ENCODE measurements at regions of chr16 and their contacts with region 1.

Region 1: GRCh38 chr16:3059000-3059722 is 6.3 kb upstream of the IL32 start:
- DNase-seq: peak; percentile 74 to 95 (median 87)
- ATAC-seq: peak; percentile 87
- H3K4me3 ChIP-seq: peak overlapping the region; percentile 84 to 85
- H3K4me3 Mint-ChIP-seq: peak overlapping the region; percentile 86
- H3K27ac ChIP-seq: peak overlapping the region; percentile 60 to 86
- H3K27ac Mint-ChIP-seq: peak overlapping the region; percentile 86
- H3K4me1 ChIP-seq: peaks cover 45% of the 10 kb centered on the region
- H3K4me1 Mint-ChIP-seq: peaks cover 49% of the 10 kb centered on the region
- H3K27me3 ChIP-seq: no peaks in the 10 kb centered on the region
- H3K27me3 Mint-ChIP-seq: no peaks in the 10 kb centered on the region
- CTCF ChIP-seq: peak; percentile 88

Region 2: DNA sequence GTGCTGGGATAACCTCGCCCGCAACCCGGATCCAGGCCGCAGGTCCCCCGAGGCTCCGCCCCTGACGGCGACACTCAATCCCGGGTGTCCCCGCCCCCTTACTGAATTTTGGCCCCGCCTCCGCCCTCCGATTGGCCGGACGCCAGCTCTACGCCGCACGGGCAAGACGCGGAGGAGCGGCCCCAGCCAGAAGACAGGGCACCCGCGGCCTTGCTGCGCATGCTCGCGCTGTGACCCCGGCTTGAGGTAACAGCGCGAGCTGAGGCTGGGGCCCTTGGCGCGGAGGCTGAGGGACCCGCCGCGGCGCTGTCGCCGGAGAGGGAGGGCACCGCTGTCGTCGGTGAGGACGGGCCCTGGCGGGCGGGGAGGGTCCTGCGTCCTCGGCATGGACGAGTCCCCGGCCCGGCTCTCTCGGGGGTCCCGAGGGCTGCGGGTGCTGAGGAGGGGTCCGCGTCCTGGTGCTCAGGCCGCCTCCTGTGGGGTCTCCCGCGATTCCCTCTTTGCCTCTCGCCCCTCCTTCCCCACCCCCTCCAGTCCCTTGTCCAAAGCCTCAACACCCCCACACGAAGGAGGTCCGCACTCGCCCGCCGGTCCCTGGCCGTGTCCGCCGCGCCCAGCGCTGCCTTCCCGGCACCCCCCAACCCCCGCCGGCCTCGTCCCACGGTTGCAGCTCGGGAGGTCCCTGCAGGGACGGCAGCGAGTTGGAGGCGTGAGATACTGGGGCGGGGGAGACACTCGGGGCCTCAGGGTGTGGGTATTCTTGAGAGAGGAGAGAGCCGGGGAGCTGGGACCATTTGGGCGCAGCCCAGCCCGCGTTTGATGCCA is 175.9 kb before region 1 on chr16 and contains the start of gene FLYWCH2:
- CTCF ChIA-PET with region 1: no interaction called
- POLR2A ChIA-PET with region 1: no interaction called
- intact Hi-C with region 1: no loop called
- DNase-seq: peak; percentile 98 to 100 (median 99)
- ATAC-seq: peak; percentile 83
- H3K4me3 ChIP-seq: peak within 1 kb of the TSS; percentile 69 to 78
- H3K4me3 Mint-ChIP-seq: peak within 1 kb of the TSS; percentile 87
- H3K27ac ChIP-seq: peak within 1 kb of the TSS; percentile 90 to 94
- H3K27ac Mint-ChIP-seq: peak within 1 kb of the TSS; percentile 95
- H3K4me1 ChIP-seq: peaks cover 9% of the 10 kb centered on the region
- H3K4me1 Mint-ChIP-seq: peaks cover 17% of the 10 kb centered on the region
- H3K27me3 ChIP-seq: no peaks in the 10 kb centered on the region
- H3K27me3 Mint-ChIP-seq: no peaks in the 10 kb centered on the region
- CTCF ChIP-seq: no peak
- total RNA-seq, gene FLYWCH2: 9.3 to 10.9 TPM

Region 3: DNA sequence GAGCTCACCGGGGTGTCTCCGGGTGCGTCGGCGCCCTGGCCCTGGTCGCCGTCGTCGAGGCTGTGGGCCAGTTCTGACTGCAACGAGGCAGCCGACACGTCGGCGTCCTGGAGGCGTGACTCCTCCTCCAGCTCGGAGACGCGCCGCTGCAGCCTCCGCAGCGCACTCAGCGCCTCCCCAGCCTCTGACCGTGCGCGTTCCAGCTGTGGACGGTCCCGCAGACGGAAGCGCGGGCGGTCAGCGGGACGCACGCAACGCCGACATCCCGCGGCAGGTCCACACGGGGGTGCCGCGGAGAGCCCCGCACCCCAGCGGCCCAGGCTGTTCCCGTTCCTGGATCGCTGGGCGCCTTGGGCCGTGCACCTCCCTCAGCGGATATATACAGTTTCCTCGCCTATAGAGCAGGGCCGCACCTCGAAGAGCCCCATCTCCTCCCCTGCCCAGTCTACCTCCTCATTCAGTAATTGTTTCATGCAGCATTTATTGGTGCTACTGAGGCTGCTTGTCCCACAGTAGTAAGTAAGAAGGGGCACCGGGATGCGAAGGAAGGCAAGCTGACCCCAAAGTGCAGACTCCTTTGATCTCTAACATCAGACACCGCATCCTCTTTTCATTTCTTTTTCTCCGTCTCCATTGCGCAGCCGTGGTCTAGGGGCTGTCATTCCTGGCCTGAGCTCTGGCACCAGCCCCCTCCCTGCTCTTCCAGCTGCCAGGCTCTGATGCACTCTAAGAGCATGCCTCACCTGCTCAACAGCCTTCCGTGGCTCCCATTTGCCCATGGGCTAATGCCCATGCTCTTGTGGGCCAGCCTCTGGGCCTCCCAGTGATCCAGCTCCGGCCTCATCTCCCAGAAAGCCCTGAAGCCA is 29.4 kb before region 1 on chr16:
- CTCF ChIA-PET with region 1: interaction called, 33 read pairs
- POLR2A ChIA-PET with region 1: interaction called, 4 read pairs
- intact Hi-C with region 1: no loop called
- DNase-seq: peak in 4 of 9 experiments; percentile 26 to 64 (median 42)
- ATAC-seq: peak; percentile 15
- H3K4me3 ChIP-seq: peak overlapping the region in 1 of 2 experiments; percentile 28
- H3K4me3 Mint-ChIP-seq: peak overlapping the region; percentile 66
- H3K27ac ChIP-seq: no peak overlapping the region
- H3K27ac Mint-ChIP-seq: no peak overlapping the region
- H3K4me1 ChIP-seq: peaks cover 33% of the 10 kb centered on the region
- H3K4me1 Mint-ChIP-seq: peaks cover 18% of the 10 kb centered on the region
- H3K27me3 ChIP-seq: peaks cover 20 to 30% of the 10 kb centered on the region in 2 experiments
- H3K27me3 Mint-ChIP-seq: peaks cover 38% of the 10 kb centered on the region
- CTCF ChIP-seq: no peak

Region 4: DNA sequence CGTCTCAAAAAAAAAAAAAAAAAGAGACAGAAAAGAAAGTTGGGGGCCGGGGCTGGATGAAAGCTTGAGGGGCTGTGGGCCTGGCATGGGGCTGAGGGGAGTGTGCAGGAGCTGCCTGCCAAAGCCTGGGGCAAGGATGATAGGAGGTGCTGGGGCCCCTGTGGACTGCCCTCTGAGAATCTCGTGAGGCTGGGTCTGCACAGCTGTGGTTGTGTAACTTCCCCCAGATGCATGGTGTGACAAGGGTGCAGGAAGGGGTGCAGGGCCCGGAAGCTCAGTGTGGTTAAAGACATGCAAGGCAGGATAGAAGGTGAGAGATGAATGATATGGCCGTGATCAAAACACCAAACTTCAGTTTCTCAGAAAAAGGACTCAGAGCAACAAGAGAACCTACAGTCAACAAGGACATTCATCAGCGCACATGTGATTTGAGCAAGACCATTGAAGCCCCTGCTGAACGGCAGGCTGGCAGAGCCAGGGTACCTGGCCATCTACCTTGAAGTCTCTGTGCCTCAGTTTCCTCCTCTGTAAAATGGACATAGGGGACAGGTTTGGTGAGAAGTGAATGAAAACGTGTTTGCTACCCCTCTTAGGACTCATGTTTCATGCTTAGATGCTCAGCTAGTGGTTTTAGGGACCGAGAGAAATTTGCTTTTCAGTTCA is 15.8 kb after region 1 on chr16:
- CTCF ChIA-PET with region 1: interaction called, 46 read pairs
- POLR2A ChIA-PET with region 1: interaction called, 27 read pairs
- intact Hi-C with region 1: loop called (anchors 1 to 2 kb)
- DNase-seq: peak; percentile 52 to 95 (median 86)
- ATAC-seq: peak; percentile 88
- H3K4me3 ChIP-seq: peak overlapping the region; percentile 3 to 19
- H3K4me3 Mint-ChIP-seq: peak overlapping the region; percentile 72
- H3K27ac ChIP-seq: peak overlapping the region; percentile 49 to 81
- H3K27ac Mint-ChIP-seq: peak overlapping the region; percentile 95
- H3K4me1 ChIP-seq: peaks cover 87% of the 10 kb centered on the region
- H3K4me1 Mint-ChIP-seq: peaks cover 89% of the 10 kb centered on the region
- H3K27me3 ChIP-seq: no peaks in the 10 kb centered on the region
- H3K27me3 Mint-ChIP-seq: no peaks in the 10 kb centered on the region
- CTCF ChIP-seq: no peak

Region 5: GRCh38 chr16:3106205-3106928 is 47.2 kb after region 1 on chr16:
- CTCF ChIA-PET with region 1: interaction called, 77 read pairs
- POLR2A ChIA-PET with region 1: interaction called, 3 read pairs
- intact Hi-C with region 1: loop called (anchors 1 to 2 kb)
- DNase-seq: peak; percentile 79 to 95 (median 90)
- ATAC-seq: peak; percentile 94
- H3K4me3 ChIP-seq: peak overlapping the region; percentile 74 to 77
- H3K4me3 Mint-ChIP-seq: peak overlapping the region; percentile 86
- H3K27ac ChIP-seq: peak overlapping the region; percentile 75 to 93
- H3K27ac Mint-ChIP-seq: peak overlapping the region; percentile 89
- H3K4me1 ChIP-seq: peaks cover 24% of the 10 kb centered on the region
- H3K4me1 Mint-ChIP-seq: peaks cover 26% of the 10 kb centered on the region
- H3K27me3 ChIP-seq: no peaks in the 10 kb centered on the region
- H3K27me3 Mint-ChIP-seq: no peaks in the 10 kb centered on the region
- CTCF ChIP-seq: no peak

Region 6: DNA sequence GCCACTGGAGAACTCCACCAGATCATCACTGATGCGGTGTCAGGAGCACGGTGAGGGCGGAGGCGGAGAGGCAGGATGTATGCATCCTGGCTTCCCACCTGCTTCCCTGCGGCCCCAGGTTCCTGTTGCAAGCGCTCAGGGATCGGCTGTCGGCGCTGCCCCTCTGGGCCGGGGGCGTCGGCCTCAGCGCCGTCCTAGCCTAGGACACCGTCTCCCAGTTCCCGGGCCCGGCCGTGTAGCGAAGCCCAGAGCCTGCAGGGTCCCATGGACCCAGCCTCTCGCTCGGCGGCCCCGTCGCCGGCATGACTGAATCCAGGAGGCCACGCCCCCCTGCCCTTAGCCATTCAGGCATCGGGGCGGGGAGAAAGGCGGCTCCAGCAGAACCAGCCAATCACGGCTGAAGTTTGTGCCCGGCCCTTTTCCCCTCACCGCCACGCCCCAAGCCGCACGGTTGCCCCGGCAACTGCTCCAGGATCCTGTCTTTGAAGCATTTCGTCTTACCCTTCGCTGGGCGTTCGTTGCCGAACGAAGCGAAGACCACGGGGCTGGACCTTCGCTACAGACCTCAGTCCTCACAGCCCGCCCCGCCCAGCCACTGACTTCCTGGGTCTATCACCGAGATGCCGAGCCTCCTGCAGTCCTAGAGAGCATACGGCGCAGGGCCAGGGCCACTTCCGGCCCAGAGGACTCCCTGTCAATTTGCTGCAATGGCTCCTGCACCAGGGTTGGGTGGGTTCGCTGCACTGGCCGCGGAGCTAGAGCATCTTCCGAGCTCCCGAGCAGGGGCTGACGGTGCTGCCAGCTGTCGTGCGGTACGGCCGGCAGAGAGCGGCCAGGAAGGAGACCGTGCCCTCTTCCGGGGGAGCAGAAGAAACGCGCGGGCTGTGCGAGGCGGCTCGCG is 65.1 kb after region 1 on chr16:
- CTCF ChIA-PET with region 1: interaction called, 324 read pairs
- POLR2A ChIA-PET with region 1: interaction called, 36 read pairs
- intact Hi-C with region 1: loop called (anchors 1 kb)
- DNase-seq: peak; percentile 88 to 98 (median 97)
- ATAC-seq: peak; percentile 90
- H3K4me3 ChIP-seq: peak overlapping the region; percentile 72 to 89
- H3K4me3 Mint-ChIP-seq: peak overlapping the region; percentile 98
- H3K27ac ChIP-seq: peak overlapping the region; percentile 44 to 72
- H3K27ac Mint-ChIP-seq: peak overlapping the region; percentile 95
- H3K4me1 ChIP-seq: peaks cover 30% of the 10 kb centered on the region
- H3K4me1 Mint-ChIP-seq: peaks cover 45% of the 10 kb centered on the region
- H3K27me3 ChIP-seq: no peaks in the 10 kb centered on the region
- H3K27me3 Mint-ChIP-seq: no peaks in the 10 kb centered on the region
- CTCF ChIP-seq: no peak

Region 7: GRCh38 chr16:3457434-3458252 is 398.5 kb after region 1 on chr16:
- CTCF ChIA-PET with region 1: interaction called, 3 read pairs
- POLR2A ChIA-PET with region 1: no interaction called
- intact Hi-C with region 1: loop called (anchors 1 to 2 kb)
- DNase-seq: peak; percentile 78 to 96 (median 90)
- ATAC-seq: peak; percentile 84
- H3K4me3 ChIP-seq: peak overlapping the region; percentile 71 to 72
- H3K4me3 Mint-ChIP-seq: peak overlapping the region; percentile 85
- H3K27ac ChIP-seq: peak overlapping the region; percentile 76 to 89
- H3K27ac Mint-ChIP-seq: peak overlapping the region; percentile 93
- H3K4me1 ChIP-seq: peaks cover 42% of the 10 kb centered on the region
- H3K4me1 Mint-ChIP-seq: peaks cover 52% of the 10 kb centered on the region
- H3K27me3 ChIP-seq: no peaks in the 10 kb centered on the region
- H3K27me3 Mint-ChIP-seq: no peaks in the 10 kb centered on the region
- CTCF ChIP-seq: peak; percentile 49